Colonic mucosa (tissue), 4 donors: ENCODE measurements at regions of chr19 and their contacts with region 1.

Region 1: GRCh38 chr19:14571695-14572490 is at the start of gene NDUFB7:
- DNase-seq: peak; percentile 92
- H3K4me3 ChIP-seq: peak within 1 kb of the TSS; percentile 89
- H3K27ac ChIP-seq: peak within 1 kb of the TSS; percentile 71
- H3K4me1 ChIP-seq: peaks cover 15% of the 10 kb centered on the region
- H3K27me3 ChIP-seq: no peaks in the 10 kb centered on the region
- CTCF ChIP-seq: peak; percentile 78
- total RNA-seq, gene NDUFB7: 216 to 302 TPM

Region 2: GRCh38 chr19:14689598-14690503 is 118.0 kb after region 1 on chr19 and contains the start of gene ZNF333:
- intact Hi-C with region 1: loop called (anchors 5 kb)
- DNase-seq: peak; percentile 99
- H3K4me3 ChIP-seq: peak within 1 kb of the TSS; percentile 67
- H3K27ac ChIP-seq: peak within 1 kb of the TSS; percentile 77
- H3K4me1 ChIP-seq: no peaks in the 10 kb centered on the region
- H3K27me3 ChIP-seq: no peaks in the 10 kb centered on the region
- CTCF ChIP-seq: no peak
- total RNA-seq, gene ZNF333: 6.7 to 7.3 TPM

Region 3: DNA sequence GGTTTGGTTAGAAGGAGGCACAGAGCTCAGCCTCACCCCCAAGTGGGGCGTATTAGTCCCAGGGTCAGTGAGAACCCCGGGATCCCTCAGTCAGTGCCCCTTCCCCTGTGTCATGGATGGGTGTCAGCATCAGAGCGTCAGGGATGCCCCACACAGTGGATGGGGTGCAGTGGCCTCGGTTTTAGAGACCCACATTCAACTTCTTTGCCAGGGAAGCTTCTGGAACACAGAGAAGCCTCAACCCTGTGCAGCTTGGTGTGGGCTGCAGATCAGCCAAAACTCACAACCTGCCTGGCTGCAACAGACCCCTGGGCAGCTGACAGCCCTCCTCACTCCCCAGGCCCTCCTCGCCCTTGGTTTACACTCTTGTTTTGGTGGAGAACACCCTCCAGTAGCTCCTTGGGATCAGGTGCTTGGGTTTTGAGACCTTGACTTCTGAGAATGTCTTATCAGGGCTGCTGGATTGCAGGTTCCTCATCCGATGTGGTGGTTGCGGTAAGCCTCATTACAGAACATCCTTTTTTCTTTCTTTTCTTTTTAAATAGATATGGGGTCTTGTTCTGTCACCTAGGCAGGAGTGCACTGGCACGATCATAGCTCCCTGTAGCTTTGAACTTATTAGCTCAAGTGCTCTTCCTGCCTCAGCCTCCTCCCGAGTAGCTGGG is 128.9 kb after region 1 on chr19:
- intact Hi-C with region 1: no loop called
- DNase-seq: no peak
- H3K4me3 ChIP-seq: no peak overlapping the region
- H3K27ac ChIP-seq: no peak overlapping the region
- H3K4me1 ChIP-seq: no peaks in the 10 kb centered on the region
- H3K27me3 ChIP-seq: no peaks in the 10 kb centered on the region
- CTCF ChIP-seq: no peak

Region 4: DNA sequence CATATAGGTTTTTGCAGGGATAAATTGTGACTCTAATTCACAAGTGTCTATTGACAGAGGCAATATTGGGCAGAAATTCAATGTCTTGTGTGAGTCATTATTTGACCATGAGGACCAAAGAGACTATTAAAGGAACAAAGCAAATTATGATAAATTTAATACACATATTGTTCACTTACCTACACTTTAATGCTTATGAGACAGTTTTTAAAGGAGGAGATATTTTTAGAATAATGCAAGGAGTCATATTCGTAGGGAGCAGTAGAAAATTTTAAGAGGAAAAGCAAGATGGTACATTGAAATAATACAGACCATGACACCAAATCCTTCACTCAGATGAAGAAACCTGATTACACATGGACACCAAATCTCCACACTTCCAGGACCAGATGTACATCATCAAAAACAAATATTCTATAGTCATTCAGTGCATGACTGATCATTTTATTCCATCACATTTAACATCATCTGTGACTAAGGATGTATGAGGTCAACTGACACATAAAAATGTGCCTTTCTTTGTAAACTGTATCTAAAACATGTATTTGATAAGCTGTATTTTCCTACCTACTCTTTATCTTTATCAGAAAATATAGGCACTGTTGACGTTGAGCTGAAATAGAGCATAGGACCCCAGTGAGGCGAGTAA is 318.2 kb after region 1 on chr19:
- intact Hi-C with region 1: loop called (anchors 5 kb)
- DNase-seq: no peak
- H3K4me3 ChIP-seq: no peak overlapping the region
- H3K27ac ChIP-seq: no peak overlapping the region
- H3K4me1 ChIP-seq: no peaks in the 10 kb centered on the region
- H3K27me3 ChIP-seq: no peaks in the 10 kb centered on the region
- CTCF ChIP-seq: no peak